Heart left ventricle (tissue), 16 donors: ENCODE measurements at regions of chr1 and their contacts with region 1.

Region 1: DNA sequence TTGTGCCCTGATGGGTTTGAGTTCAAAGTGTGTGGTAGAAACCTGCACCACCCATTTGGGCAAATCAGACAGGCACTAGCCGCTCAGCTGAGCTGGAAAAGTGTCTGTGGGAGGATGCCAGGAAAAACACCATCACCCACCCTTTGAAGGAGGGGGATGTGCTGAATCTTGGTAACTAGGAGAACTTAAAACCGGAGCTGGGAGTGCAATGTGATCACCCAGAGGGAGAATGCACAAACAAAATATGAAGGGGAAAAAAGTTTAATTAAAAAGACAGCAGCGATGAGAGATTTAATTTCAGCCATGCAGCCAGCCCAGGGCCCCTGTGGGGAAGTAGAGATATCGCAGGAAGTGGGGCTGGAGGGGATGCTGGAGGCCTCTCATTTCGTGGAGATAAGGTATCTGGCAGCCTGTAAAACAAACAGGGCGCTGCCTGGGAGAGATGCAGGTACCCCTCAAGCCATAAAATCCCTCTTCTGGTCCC is 86.8 kb upstream of the BCAR3 start:
- DNase-seq: no peak
- ATAC-seq: peak in 1 of 4 donors; percentile 30
- H3K4me3 ChIP-seq: peak overlapping the region in 1 of 12 donors; percentile 10
- H3K27ac ChIP-seq: peak overlapping the region in 2 of 12 donors; percentile 30 to 53
- H3K4me1 ChIP-seq: peaks cover 0 to 19% (median 13%) of the 10 kb centered on the region in 12 donors
- H3K27me3 ChIP-seq: no peaks in the 10 kb centered on the region
- CTCF ChIP-seq: no peak
- POLR2A ChIP-seq: no peak

Region 2: GRCh38 chr1:93804412-93804811 is 36.0 kb after region 1 on chr1:
- intact Hi-C with region 1: loop called in 1 of 10 experiments (anchors 5 kb)
- DNase-seq: peak in 2 of 5 donors; percentile 41 to 47
- ATAC-seq: peak; percentile 76 to 97 (median 95)
- H3K4me3 ChIP-seq: peak overlapping the region in 2 of 12 donors; percentile 3 to 10
- H3K27ac ChIP-seq: peak overlapping the region in 10 of 12 donors; percentile 9 to 67 (median 41)
- H3K4me1 ChIP-seq: peaks cover 0 to 23% (median 12%) of the 10 kb centered on the region in 12 donors
- H3K27me3 ChIP-seq: no peaks in the 10 kb centered on the region
- CTCF ChIP-seq: no peak
- POLR2A ChIP-seq: no peak

Region 3: GRCh38 chr1:93888896-93889295 is 120.5 kb after region 1 on chr1:
- intact Hi-C with region 1: no loop called
- DNase-seq: no peak
- ATAC-seq: no peak
- H3K4me3 ChIP-seq: no peak overlapping the region
- H3K27ac ChIP-seq: no peak overlapping the region
- H3K4me1 ChIP-seq: no peaks in the 10 kb centered on the region
- H3K27me3 ChIP-seq: no peaks in the 10 kb centered on the region
- CTCF ChIP-seq: no peak
- POLR2A ChIP-seq: no peak

Region 4: DNA sequence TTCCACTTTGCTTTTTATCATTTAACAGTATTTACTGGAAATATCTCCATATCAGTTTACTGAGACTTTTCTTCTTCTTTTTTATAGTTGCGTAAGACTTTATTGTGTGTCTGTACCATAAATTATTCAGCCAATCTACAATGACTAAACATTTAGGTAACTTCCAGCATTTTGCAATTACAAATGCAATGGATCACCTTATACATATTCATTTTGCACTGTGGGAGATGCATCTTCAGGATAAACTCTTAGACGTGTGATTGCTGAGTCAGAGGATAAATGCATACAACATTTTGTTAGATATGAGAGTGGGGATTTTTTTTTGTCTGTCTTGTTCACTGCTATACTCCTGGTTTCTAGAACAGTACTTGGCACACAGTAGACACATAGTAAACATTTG is 236.5 kb after region 1 on chr1:
- intact Hi-C with region 1: no loop called
- DNase-seq: no peak
- ATAC-seq: no peak
- H3K4me3 ChIP-seq: no peak overlapping the region
- H3K27ac ChIP-seq: no peak overlapping the region
- H3K4me1 ChIP-seq: no peaks in the 10 kb centered on the region
- H3K27me3 ChIP-seq: no peaks in the 10 kb centered on the region
- CTCF ChIP-seq: no peak
- POLR2A ChIP-seq: no peak